Transverse colon (tissue), 4 donors: ENCODE measurements at regions of chr6 and their contacts with region 1.

Region 1: GRCh38 chr6:164817662-164818061 is 491.7 kb downstream of the C6orf118 start:
- DNase-seq: no peak
- H3K4me3 ChIP-seq: no peak overlapping the region
- H3K27ac ChIP-seq: no peak overlapping the region
- H3K4me1 ChIP-seq: no peaks in the 10 kb centered on the region
- H3K27me3 ChIP-seq: no peaks in the 10 kb centered on the region
- CTCF ChIP-seq: no peak
- EP300 ChIP-seq: no peak
- POLR2A ChIP-seq: no peak

Region 2: GRCh38 chr6:164528539-164528938 is 289.1 kb before region 1 on chr6:
- in situ Hi-C with region 1: no loop called
- intact Hi-C with region 1: no loop called
- DNase-seq: no peak
- H3K4me3 ChIP-seq: no peak overlapping the region
- H3K27ac ChIP-seq: no peak overlapping the region
- H3K4me1 ChIP-seq: no peaks in the 10 kb centered on the region
- H3K27me3 ChIP-seq: no peaks in the 10 kb centered on the region
- CTCF ChIP-seq: no peak
- EP300 ChIP-seq: no peak
- POLR2A ChIP-seq: no peak

Region 3: DNA sequence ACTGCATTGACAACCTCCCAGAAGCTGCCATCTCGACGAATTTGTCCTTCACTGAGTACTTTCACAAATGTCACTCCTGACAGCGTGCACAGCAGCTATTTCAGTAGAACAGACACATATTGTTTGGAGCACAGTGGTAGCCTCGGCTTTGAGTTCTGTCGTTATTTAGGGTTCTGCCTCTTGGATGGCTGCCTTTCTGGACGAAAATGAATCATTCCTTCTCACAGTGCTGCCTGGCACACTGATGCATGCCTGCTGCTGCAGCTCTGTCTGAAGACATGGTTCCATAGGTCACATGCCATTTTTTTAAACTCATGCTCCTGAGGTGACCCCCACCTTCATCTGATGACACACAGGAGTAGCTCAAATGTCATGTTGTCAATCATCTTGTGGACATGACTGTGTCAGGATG is 14.8 kb after region 1 on chr6:
- in situ Hi-C with region 1: no loop called
- intact Hi-C with region 1: loop called (anchors 2 kb)
- DNase-seq: no peak
- H3K4me3 ChIP-seq: no peak overlapping the region
- H3K27ac ChIP-seq: no peak overlapping the region
- H3K4me1 ChIP-seq: no peaks in the 10 kb centered on the region
- H3K27me3 ChIP-seq: no peaks in the 10 kb centered on the region
- CTCF ChIP-seq: no peak
- EP300 ChIP-seq: no peak
- POLR2A ChIP-seq: no peak

Region 4: DNA sequence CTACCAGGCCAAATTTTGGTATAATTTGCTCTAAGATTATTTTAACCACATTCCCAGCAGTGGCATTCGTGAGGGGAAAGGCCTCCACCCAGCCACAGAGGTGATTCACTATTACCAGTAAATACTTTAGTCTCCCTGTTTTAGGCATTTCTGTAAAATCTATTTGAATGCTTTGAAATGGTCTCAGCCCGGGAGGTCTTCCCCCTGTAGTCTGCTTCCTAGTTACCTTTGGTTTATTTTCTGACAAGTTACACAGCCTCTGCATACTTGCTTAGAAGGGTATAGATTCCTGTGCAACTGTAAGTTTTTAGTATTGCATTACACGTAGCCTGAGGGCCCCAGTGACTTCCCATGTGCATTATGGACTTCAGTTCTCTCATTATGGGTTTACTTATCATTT is 243.1 kb after region 1 on chr6:
- in situ Hi-C with region 1: no loop called
- intact Hi-C with region 1: no loop called
- DNase-seq: no peak
- H3K4me3 ChIP-seq: no peak overlapping the region
- H3K27ac ChIP-seq: no peak overlapping the region
- H3K4me1 ChIP-seq: no peaks in the 10 kb centered on the region
- H3K27me3 ChIP-seq: no peaks in the 10 kb centered on the region
- CTCF ChIP-seq: no peak
- EP300 ChIP-seq: no peak
- POLR2A ChIP-seq: no peak